CD4-positive, alpha-beta T cell (primary cell): ENCODE measurements at regions of chr19 and their contacts with region 1.

Region 1: GRCh38 chr19:40662921-40663694 is 27.3 kb downstream of the NUMBL start:
- DNase-seq: peak; percentile 85 to 98 (median 94)
- ATAC-seq: peak; percentile 89
- H3K4me3 ChIP-seq: peak overlapping the region; percentile 56
- H3K4me3 Mint-ChIP-seq: peak overlapping the region; percentile 91
- H3K27ac ChIP-seq: peak overlapping the region; percentile 35 to 53
- H3K27ac Mint-ChIP-seq: peak overlapping the region; percentile 74
- H3K4me1 ChIP-seq: peaks cover 15% of the 10 kb centered on the region
- H3K4me1 Mint-ChIP-seq: peaks cover 19% of the 10 kb centered on the region
- H3K27me3 ChIP-seq: no peaks in the 10 kb centered on the region
- H3K27me3 Mint-ChIP-seq: no peaks in the 10 kb centered on the region
- CTCF ChIP-seq: peak; percentile 90

Region 2: GRCh38 chr19:40690693-40691420 is 27.7 kb after region 1 on chr19:
- CTCF ChIA-PET with region 1: no interaction called
- POLR2A ChIA-PET with region 1: interaction called, 4 read pairs
- intact Hi-C with region 1: loop called in 1 of 2 experiments (anchors 2 kb)
- DNase-seq: peak; percentile 72 to 95 (median 84)
- ATAC-seq: peak; percentile 85
- H3K4me3 ChIP-seq: peak overlapping the region; percentile 70
- H3K4me3 Mint-ChIP-seq: peak overlapping the region; percentile 94
- H3K27ac ChIP-seq: no peak overlapping the region
- H3K27ac Mint-ChIP-seq: peak overlapping the region; percentile 54
- H3K4me1 ChIP-seq: peaks cover 20% of the 10 kb centered on the region
- H3K4me1 Mint-ChIP-seq: peaks cover 6% of the 10 kb centered on the region
- H3K27me3 ChIP-seq: no peaks in the 10 kb centered on the region
- H3K27me3 Mint-ChIP-seq: no peaks in the 10 kb centered on the region
- CTCF ChIP-seq: no peak

Region 3: GRCh38 chr19:40777937-40778705 is 115.0 kb after region 1 on chr19 and contains the start of gene RAB4B:
- CTCF ChIA-PET with region 1: interaction called, 14 read pairs
- POLR2A ChIA-PET with region 1: interaction called, 14 read pairs
- intact Hi-C with region 1: no loop called
- DNase-seq: peak; percentile 99 to 100 (median 100)
- ATAC-seq: peak; percentile 84
- H3K4me3 ChIP-seq: peak within 1 kb of the TSS; percentile 69
- H3K4me3 Mint-ChIP-seq: peak within 1 kb of the TSS; percentile 95
- H3K27ac ChIP-seq: peak within 1 kb of the TSS; percentile 93 to 95
- H3K27ac Mint-ChIP-seq: peak within 1 kb of the TSS; percentile 93
- H3K4me1 ChIP-seq: peaks cover 23% of the 10 kb centered on the region
- H3K4me1 Mint-ChIP-seq: peaks cover 36% of the 10 kb centered on the region
- H3K27me3 ChIP-seq: no peaks in the 10 kb centered on the region
- H3K27me3 Mint-ChIP-seq: no peaks in the 10 kb centered on the region
- CTCF ChIP-seq: no peak
- total RNA-seq, gene RAB4B: 26.6 to 26.9 TPM

Region 4: GRCh38 chr19:40813182-40813958 is 150.3 kb after region 1 on chr19:
- CTCF ChIA-PET with region 1: interaction called, 24 read pairs
- POLR2A ChIA-PET with region 1: interaction called, 13 read pairs
- intact Hi-C with region 1: loop called in 1 of 2 experiments (anchors 2 kb)
- DNase-seq: no peak
- ATAC-seq: no peak
- H3K4me3 ChIP-seq: no peak overlapping the region
- H3K4me3 Mint-ChIP-seq: peak overlapping the region; percentile 95
- H3K27ac ChIP-seq: no peak overlapping the region
- H3K27ac Mint-ChIP-seq: peak overlapping the region; percentile 90
- H3K4me1 ChIP-seq: peaks cover 49% of the 10 kb centered on the region
- H3K4me1 Mint-ChIP-seq: peaks cover 41% of the 10 kb centered on the region
- H3K27me3 ChIP-seq: no peaks in the 10 kb centered on the region
- H3K27me3 Mint-ChIP-seq: no peaks in the 10 kb centered on the region
- CTCF ChIP-seq: no peak

Region 5: DNA sequence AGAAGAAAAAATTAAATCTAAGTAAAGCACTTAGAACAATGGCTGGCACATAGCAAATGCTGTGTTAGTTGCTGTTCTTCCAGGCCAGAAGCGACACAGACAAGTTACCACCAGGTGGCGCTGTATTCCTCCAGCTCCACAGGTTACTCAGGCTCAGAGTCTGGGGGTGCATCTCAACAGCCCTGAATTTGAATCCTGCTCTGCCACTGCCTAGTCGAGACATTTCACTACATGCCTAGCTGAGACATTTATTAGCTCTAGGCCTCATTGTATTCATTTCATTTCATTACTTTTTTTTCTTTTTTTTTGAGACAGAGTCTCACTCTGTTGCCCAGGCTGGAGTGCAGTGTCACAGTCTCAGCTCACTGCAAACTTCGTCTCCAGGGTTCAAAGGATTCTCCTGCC is 311.5 kb after region 1 on chr19:
- CTCF ChIA-PET with region 1: no interaction called
- POLR2A ChIA-PET with region 1: interaction called, 7 read pairs
- intact Hi-C with region 1: loop called in 1 of 2 experiments (anchors 5 kb)
- DNase-seq: peak; percentile 68 to 92 (median 76)
- ATAC-seq: peak; percentile 78
- H3K4me3 ChIP-seq: no peak overlapping the region
- H3K4me3 Mint-ChIP-seq: no peak overlapping the region
- H3K27ac ChIP-seq: no peak overlapping the region
- H3K27ac Mint-ChIP-seq: no peak overlapping the region
- H3K4me1 ChIP-seq: peaks cover 20% of the 10 kb centered on the region
- H3K4me1 Mint-ChIP-seq: peaks cover 32% of the 10 kb centered on the region
- H3K27me3 ChIP-seq: peaks cover 0 to 2% of the 10 kb centered on the region in 2 experiments
- H3K27me3 Mint-ChIP-seq: peaks cover 21% of the 10 kb centered on the region
- CTCF ChIP-seq: peak; percentile 99

Region 6: DNA sequence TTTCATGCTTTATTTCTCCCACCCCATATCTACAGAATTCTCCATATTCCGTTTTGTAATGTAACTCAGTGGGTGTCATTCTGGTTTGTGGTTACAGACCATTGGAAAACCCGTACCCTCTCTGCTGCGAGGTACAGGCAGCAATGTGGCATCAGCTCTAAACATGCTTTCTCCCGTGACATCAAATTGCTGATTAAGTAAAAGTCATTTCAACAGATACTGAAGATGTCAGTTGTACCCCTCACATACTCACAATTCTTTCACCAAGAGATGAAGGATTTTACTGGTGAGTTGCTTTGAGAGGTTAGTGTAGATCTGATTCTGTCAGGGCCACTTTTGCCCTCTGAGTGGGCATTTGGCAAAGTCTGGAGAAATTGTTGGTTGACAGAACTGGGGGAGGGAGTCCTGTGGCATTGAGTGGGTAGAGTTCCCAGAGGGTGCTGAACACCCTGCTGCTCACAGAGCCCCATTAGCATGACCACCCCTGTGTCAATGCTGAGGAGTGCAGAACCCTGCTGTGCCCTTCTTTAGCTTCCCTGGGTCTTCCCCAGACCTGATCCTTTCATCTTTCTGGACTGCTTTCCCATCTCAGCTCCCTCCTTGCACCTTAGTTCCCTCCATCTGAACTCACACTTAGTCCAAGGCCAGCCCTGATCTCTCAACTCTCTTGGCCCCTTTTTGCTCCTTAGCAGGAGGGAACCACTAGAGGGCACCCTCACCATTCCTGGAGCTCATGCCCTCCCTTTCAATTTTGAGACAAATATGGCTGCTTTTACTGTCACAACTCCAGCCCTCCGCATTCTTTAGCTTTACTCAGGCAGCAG is 1971.5 kb after region 1 on chr19:
- CTCF ChIA-PET with region 1: no interaction called
- POLR2A ChIA-PET with region 1: no interaction called
- intact Hi-C with region 1: no loop called
- DNase-seq: peak in 8 of 14 experiments; percentile 6 to 45 (median 10)
- ATAC-seq: no peak
- H3K4me3 ChIP-seq: no peak overlapping the region
- H3K4me3 Mint-ChIP-seq: no peak overlapping the region
- H3K27ac ChIP-seq: no peak overlapping the region
- H3K27ac Mint-ChIP-seq: no peak overlapping the region
- H3K4me1 ChIP-seq: no peaks in the 10 kb centered on the region
- H3K4me1 Mint-ChIP-seq: no peaks in the 10 kb centered on the region
- H3K27me3 ChIP-seq: peaks cover 4% of the 10 kb centered on the region in 2 experiments
- H3K27me3 Mint-ChIP-seq: peaks cover 29% of the 10 kb centered on the region
- CTCF ChIP-seq: peak; percentile 30